CD4-positive, alpha-beta memory T cell (primary cell): ENCODE measurements at regions of chr15 and their contacts with region 1.

Region 1: DNA sequence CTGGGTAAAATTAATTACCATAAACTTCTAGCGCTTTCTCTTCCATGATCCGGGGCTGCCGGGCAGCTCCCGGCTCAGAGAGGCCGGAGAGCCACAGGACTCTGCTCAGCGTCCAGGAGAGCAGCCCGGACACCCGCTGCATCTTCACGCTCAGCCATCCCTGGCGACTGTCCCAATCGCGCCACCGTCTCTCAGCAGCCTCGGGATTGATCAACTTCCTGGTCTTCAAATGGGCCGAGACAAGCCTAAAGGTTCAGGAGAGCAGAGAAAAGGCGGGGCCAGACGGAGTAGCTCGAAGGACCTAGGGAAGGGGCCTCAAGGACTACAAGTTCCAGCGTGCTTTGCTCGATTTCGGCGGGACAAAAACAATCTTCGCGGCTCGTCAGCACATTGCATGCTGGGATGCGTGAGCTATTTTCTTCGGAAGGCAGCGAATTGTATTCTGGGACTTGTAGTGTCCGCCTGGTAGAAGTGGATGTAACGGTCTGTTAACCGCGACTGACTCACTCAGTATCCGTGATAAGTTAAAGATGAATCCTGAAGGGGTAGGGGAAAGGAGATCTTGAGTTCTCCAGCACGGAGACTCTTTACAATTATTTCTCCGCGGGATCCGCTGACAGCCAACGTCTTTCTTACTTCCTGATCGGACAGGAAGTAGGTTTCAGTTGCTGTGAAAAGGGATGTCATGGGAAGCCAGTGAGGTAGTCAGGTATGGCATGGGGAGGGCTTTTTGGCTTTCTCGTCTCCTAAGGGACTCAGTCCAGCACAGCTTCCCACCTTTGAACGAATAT is at the start of gene CIAO2A:
- DNase-seq: peak; percentile 86 to 96 (median 90)
- H3K4me3 ChIP-seq: peak within 1 kb of the TSS; percentile 87 to 98
- H3K4me3 Mint-ChIP-seq: peak within 1 kb of the TSS; percentile 92 to 99 (median 98)
- H3K27ac ChIP-seq: peak within 1 kb of the TSS; percentile 85
- H3K27ac Mint-ChIP-seq: peak within 1 kb of the TSS; percentile 90 to 100 (median 98)
- H3K4me1 ChIP-seq: peaks cover 65% of the 10 kb centered on the region
- H3K4me1 Mint-ChIP-seq: peaks cover 55 to 86% (median 69%) of the 10 kb centered on the region in 4 donors
- H3K27me3 ChIP-seq: no peaks in the 10 kb centered on the region
- H3K27me3 Mint-ChIP-seq: no peaks in the 10 kb centered on the region
- total RNA-seq, gene CIAO2A: 35.0 to 36.4 TPM

Region 2: GRCh38 chr15:63473999-63474809 is 619.6 kb before region 1 on chr15:
- CTCF ChIA-PET with region 1: no interaction called
- POLR2A ChIA-PET with region 1: no interaction called
- intact Hi-C with region 1: loop called (anchors 10 kb)
- DNase-seq: peak in 4 of 5 donors; percentile 51 to 87 (median 60)
- H3K4me3 ChIP-seq: no peak overlapping the region
- H3K4me3 Mint-ChIP-seq: peak overlapping the region in 6 of 8 donors; percentile 62 to 86 (median 78)
- H3K27ac ChIP-seq: peak overlapping the region; percentile 43
- H3K27ac Mint-ChIP-seq: peak overlapping the region; percentile 87 to 99 (median 97)
- H3K4me1 ChIP-seq: peaks cover 59% of the 10 kb centered on the region
- H3K4me1 Mint-ChIP-seq: peaks cover 38 to 58% (median 54%) of the 10 kb centered on the region in 4 donors
- H3K27me3 ChIP-seq: no peaks in the 10 kb centered on the region
- H3K27me3 Mint-ChIP-seq: no peaks in the 10 kb centered on the region

Region 3: DNA sequence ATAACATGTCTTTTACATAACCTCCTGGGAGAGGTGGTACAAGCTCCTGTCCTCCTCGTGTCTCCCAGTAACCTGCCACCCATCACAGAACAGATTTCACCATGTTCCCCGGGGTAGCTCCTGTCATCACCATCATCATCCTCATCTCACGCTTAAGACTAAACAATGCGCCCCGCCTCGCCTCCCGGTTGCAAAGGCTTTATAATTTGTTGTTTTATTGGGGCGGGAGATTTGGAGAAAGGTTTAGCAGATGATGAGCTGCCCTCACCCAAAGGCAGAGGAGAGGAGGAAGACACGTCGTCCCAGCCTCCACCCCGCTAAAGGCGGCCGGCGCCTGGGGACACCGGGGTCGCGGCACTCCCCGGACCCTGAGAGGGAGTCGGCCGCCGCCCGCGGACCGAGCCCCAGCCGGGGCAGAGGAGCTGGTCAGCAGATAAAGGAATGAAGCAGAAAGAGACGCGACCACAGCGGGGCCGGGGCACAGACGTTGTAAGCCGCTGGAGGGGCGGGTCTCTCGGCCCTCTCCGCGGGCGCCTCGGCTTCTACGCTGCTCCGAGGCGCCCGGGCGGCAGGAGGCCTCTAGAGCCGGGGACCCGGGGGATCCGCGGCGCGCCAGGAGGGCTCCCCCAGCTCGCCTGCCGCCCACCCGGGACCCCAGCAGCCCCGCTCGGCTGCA is 260.7 kb before region 1 on chr15:
- CTCF ChIA-PET with region 1: no interaction called
- POLR2A ChIA-PET with region 1: interaction called, 6 read pairs
- intact Hi-C with region 1: loop called (anchors 1 kb)
- DNase-seq: peak in 4 of 5 donors; percentile 40 to 53 (median 46)
- H3K4me3 ChIP-seq: peak overlapping the region; percentile 53 to 69
- H3K4me3 Mint-ChIP-seq: peak overlapping the region; percentile 94 to 98 (median 96)
- H3K27ac ChIP-seq: peak overlapping the region; percentile 94
- H3K27ac Mint-ChIP-seq: peak overlapping the region; percentile 95 to 100 (median 97)
- H3K4me1 ChIP-seq: peaks cover 56% of the 10 kb centered on the region
- H3K4me1 Mint-ChIP-seq: peaks cover 39 to 62% (median 48%) of the 10 kb centered on the region in 4 donors
- H3K27me3 ChIP-seq: no peaks in the 10 kb centered on the region
- H3K27me3 Mint-ChIP-seq: no peaks in the 10 kb centered on the region

Region 4: GRCh38 chr15:64153480-64154367 is 59.9 kb after region 1 on chr15:
- CTCF ChIA-PET with region 1: interaction called, 5 read pairs
- POLR2A ChIA-PET with region 1: interaction called, 48 read pairs
- intact Hi-C with region 1: loop called (anchors 2 kb)
- DNase-seq: peak; percentile 84 to 89 (median 86)
- H3K4me3 ChIP-seq: no peak overlapping the region
- H3K4me3 Mint-ChIP-seq: peak overlapping the region; percentile 72 to 92 (median 80)
- H3K27ac ChIP-seq: peak overlapping the region; percentile 11
- H3K27ac Mint-ChIP-seq: peak overlapping the region in 6 of 7 donors; percentile 18 to 87 (median 76)
- H3K4me1 ChIP-seq: peaks cover 41% of the 10 kb centered on the region
- H3K4me1 Mint-ChIP-seq: peaks cover 19 to 51% (median 32%) of the 10 kb centered on the region in 4 donors
- H3K27me3 ChIP-seq: peaks cover 6% of the 10 kb centered on the region
- H3K27me3 Mint-ChIP-seq: peaks cover 5 to 8% of the 10 kb centered on the region in 2 donors

Region 5: GRCh38 chr15:64344651-64345294 is 251.0 kb after region 1 on chr15:
- CTCF ChIA-PET with region 1: no interaction called
- POLR2A ChIA-PET with region 1: no interaction called
- intact Hi-C with region 1: no loop called
- DNase-seq: no peak
- H3K4me3 ChIP-seq: no peak overlapping the region
- H3K4me3 Mint-ChIP-seq: no peak overlapping the region
- H3K27ac ChIP-seq: no peak overlapping the region
- H3K27ac Mint-ChIP-seq: no peak overlapping the region
- H3K4me1 ChIP-seq: no peaks in the 10 kb centered on the region
- H3K4me1 Mint-ChIP-seq: peaks cover 18 to 27% (median 21%) of the 10 kb centered on the region in 4 donors
- H3K27me3 ChIP-seq: no peaks in the 10 kb centered on the region
- H3K27me3 Mint-ChIP-seq: no peaks in the 10 kb centered on the region

Region 6: DNA sequence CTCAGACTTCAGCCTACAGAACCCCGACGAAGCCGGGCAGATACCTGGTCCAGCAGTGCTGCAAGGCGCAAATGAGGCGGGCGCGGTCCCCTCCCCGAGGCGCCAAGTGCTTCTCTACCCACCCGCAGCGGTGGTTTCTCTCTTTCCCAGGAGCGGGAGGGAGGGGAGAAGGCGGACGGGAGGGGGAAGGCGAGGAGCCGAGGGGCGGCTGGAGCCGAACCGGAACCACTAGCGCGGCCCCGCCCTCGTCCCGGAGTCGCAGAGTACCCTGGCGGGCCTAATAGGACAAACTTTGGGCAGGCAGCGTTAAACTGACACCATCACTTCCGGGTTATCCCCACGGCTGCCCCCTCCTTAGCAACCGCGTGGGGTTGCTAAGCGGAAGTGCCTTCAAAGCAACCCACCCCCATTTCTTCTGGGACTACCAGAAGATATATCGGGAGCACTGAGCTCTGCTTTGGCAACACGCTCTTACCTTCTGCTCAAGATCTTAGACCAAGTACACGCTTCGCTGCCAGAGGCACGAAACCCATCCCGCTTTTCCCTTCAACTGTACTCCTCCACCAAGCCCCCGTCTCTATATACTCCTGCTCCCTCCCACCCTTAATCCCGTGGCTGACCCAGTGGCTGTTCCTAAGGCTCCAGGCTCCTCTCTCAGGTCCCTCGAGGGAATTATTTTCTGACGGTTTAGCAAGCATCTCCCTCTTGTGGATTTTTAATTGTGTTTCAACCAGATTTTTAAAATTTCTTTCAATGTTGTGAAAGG is 262.3 kb after region 1 on chr15 and contains the start of gene CSNK1G1:
- CTCF ChIA-PET with region 1: no interaction called
- POLR2A ChIA-PET with region 1: no interaction called
- intact Hi-C with region 1: loop called (anchors 1 kb)
- DNase-seq: peak; percentile 89 to 94 (median 90)
- H3K4me3 ChIP-seq: peak within 1 kb of the TSS; percentile 76 to 95
- H3K4me3 Mint-ChIP-seq: peak within 1 kb of the TSS; percentile 89 to 99 (median 96)
- H3K27ac ChIP-seq: peak within 1 kb of the TSS; percentile 67
- H3K27ac Mint-ChIP-seq: peak within 1 kb of the TSS; percentile 92 to 97 (median 94)
- H3K4me1 ChIP-seq: peaks cover 21% of the 10 kb centered on the region
- H3K4me1 Mint-ChIP-seq: peaks cover 13 to 25% (median 19%) of the 10 kb centered on the region in 4 donors
- H3K27me3 ChIP-seq: no peaks in the 10 kb centered on the region
- H3K27me3 Mint-ChIP-seq: no peaks in the 10 kb centered on the region
- total RNA-seq, gene CSNK1G1: 27.3 to 27.7 TPM

Region 7: DNA sequence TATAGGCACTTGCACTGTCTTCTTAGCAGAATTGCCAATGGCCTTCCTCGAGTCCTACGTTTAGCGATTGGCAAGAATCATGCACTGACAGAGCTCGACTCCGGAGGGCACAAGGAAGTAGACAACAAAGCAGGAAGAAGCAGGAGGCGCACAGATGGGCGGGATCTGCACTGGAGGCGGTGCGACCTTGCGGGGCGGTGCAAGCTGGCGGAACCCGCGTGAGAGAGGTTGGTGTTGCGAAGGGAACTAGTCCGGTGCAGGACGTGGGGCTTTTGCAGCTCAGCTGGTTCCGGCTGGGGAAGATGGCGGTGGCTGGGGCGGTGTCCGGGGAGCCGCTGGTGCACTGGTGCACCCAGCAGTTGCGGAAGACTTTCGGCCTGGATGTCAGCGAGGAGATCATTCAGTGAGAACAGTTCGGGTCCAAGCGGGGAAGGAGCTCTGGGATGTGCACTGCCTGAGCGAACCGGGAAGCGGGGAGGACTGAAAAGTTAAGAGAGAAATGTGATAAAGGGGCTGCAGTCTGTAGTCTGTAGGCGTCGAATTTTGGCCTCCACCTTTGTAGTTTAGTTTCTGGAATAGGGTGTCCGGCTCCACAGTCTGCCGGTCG is 293.8 kb after region 1 on chr15 and contains the start of gene TRIP4:
- CTCF ChIA-PET with region 1: no interaction called
- POLR2A ChIA-PET with region 1: interaction called, 11 read pairs
- intact Hi-C with region 1: loop called (anchors 10 kb)
- DNase-seq: peak; percentile 95 to 98 (median 96)
- H3K4me3 ChIP-seq: peak within 1 kb of the TSS; percentile 79 to 89
- H3K4me3 Mint-ChIP-seq: peak within 1 kb of the TSS; percentile 96 to 100 (median 98)
- H3K27ac ChIP-seq: peak within 1 kb of the TSS; percentile 64
- H3K27ac Mint-ChIP-seq: peak within 1 kb of the TSS; percentile 80 to 99 (median 96)
- H3K4me1 ChIP-seq: peaks cover 12% of the 10 kb centered on the region
- H3K4me1 Mint-ChIP-seq: peaks cover 16 to 19% (median 19%) of the 10 kb centered on the region in 4 donors
- H3K27me3 ChIP-seq: no peaks in the 10 kb centered on the region
- H3K27me3 Mint-ChIP-seq: no peaks in the 10 kb centered on the region
- total RNA-seq, gene TRIP4: 28.2 to 29.4 TPM

Region 8: GRCh38 chr15:64503197-64503596 is 409.4 kb after region 1 on chr15:
- CTCF ChIA-PET with region 1: no interaction called
- POLR2A ChIA-PET with region 1: no interaction called
- intact Hi-C with region 1: no loop called
- DNase-seq: peak in 1 of 5 donors; percentile 20
- H3K4me3 ChIP-seq: peak overlapping the region; percentile 23 to 30
- H3K4me3 Mint-ChIP-seq: peak overlapping the region; percentile 49 to 80 (median 68)
- H3K27ac ChIP-seq: peak overlapping the region; percentile 52
- H3K27ac Mint-ChIP-seq: peak overlapping the region; percentile 68 to 94 (median 84)
- H3K4me1 ChIP-seq: peaks cover 82% of the 10 kb centered on the region
- H3K4me1 Mint-ChIP-seq: peaks cover 68 to 91% (median 80%) of the 10 kb centered on the region in 4 donors
- H3K27me3 ChIP-seq: no peaks in the 10 kb centered on the region
- H3K27me3 Mint-ChIP-seq: no peaks in the 10 kb centered on the region

Region 9: DNA sequence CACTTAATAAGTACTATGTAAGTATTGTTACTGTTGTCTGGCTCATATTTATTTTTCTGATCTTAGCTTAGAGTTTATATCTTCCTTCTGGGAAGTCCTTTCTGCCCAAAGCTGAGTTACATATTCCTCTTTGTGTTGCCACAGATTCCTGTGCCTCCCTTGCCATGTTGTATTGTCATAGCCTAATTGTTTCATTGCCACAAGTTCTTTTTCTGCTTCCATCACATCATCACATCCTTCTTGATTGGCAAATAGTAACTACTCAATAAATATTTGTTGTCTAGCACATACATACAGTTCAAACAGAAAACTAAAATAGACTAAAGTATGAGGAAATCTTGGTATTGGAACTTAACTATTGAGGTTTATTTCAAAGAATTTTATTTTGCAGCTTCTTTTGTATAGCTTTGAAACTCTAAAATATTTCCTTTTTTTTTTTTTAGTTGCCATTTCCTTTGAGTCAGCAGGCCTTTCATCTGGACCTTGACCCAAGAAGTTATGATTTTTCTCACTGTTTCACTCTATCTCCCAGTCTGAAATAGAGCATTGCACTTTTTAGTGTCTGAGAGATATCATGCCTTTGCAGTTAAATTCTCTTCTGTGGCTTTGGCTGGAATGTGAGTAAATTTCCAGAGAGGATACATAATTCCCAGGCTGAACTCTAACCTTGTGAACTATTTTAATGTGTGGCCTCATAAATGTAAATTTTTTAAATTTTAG is 464.8 kb after region 1 on chr15:
- CTCF ChIA-PET with region 1: no interaction called
- POLR2A ChIA-PET with region 1: no interaction called
- intact Hi-C with region 1: no loop called
- DNase-seq: no peak
- H3K4me3 ChIP-seq: no peak overlapping the region
- H3K4me3 Mint-ChIP-seq: no peak overlapping the region
- H3K27ac ChIP-seq: no peak overlapping the region
- H3K27ac Mint-ChIP-seq: peak overlapping the region in 3 of 7 donors; percentile 33 to 53 (median 49)
- H3K4me1 ChIP-seq: peaks cover 16% of the 10 kb centered on the region
- H3K4me1 Mint-ChIP-seq: peaks cover 30 to 47% (median 35%) of the 10 kb centered on the region in 4 donors
- H3K27me3 ChIP-seq: no peaks in the 10 kb centered on the region
- H3K27me3 Mint-ChIP-seq: no peaks in the 10 kb centered on the region

Region 10: GRCh38 chr15:64702816-64703646 is 609.2 kb after region 1 on chr15:
- CTCF ChIA-PET with region 1: no interaction called
- POLR2A ChIA-PET with region 1: no interaction called
- intact Hi-C with region 1: loop called (anchors 10 kb)
- DNase-seq: peak; percentile 91 to 94 (median 91)
- H3K4me3 ChIP-seq: peak overlapping the region; percentile 54 to 84
- H3K4me3 Mint-ChIP-seq: peak overlapping the region; percentile 79 to 95 (median 92)
- H3K27ac ChIP-seq: peak overlapping the region; percentile 73
- H3K27ac Mint-ChIP-seq: peak overlapping the region; percentile 44 to 95 (median 92)
- H3K4me1 ChIP-seq: peaks cover 52% of the 10 kb centered on the region
- H3K4me1 Mint-ChIP-seq: peaks cover 45 to 59% (median 52%) of the 10 kb centered on the region in 4 donors
- H3K27me3 ChIP-seq: no peaks in the 10 kb centered on the region
- H3K27me3 Mint-ChIP-seq: no peaks in the 10 kb centered on the region